MCF 10A (cell line): ENCODE measurements at regions of chr1 and their contacts with region 1.

Region 1: GRCh38 chr1:21368515-21369289 is 71.2 kb upstream of the NBPF3 start:
- DNase-seq: peak; percentile 87
- H3K4me3 Mint-ChIP-seq: no peak overlapping the region
- H3K27ac Mint-ChIP-seq: no peak overlapping the region
- H3K4me1 Mint-ChIP-seq: peaks cover 11% of the 10 kb centered on the region
- H3K27me3 Mint-ChIP-seq: no peaks in the 10 kb centered on the region
- CTCF ChIP-seq: peak; percentile 98

Region 2: GRCh38 chr1:21232044-21232443 is 136.7 kb before region 1 on chr1:
- CTCF ChIA-PET with region 1: interaction called, 283 read pairs
- POLR2A ChIA-PET with region 1: interaction called, 3 read pairs
- intact Hi-C with region 1: loop called (anchors 1 kb)
- DNase-seq: peak; percentile 79
- H3K4me3 Mint-ChIP-seq: no peak overlapping the region
- H3K27ac Mint-ChIP-seq: no peak overlapping the region
- H3K4me1 Mint-ChIP-seq: no peaks in the 10 kb centered on the region
- H3K27me3 Mint-ChIP-seq: no peaks in the 10 kb centered on the region
- CTCF ChIP-seq: peak; percentile 77

Region 3: DNA sequence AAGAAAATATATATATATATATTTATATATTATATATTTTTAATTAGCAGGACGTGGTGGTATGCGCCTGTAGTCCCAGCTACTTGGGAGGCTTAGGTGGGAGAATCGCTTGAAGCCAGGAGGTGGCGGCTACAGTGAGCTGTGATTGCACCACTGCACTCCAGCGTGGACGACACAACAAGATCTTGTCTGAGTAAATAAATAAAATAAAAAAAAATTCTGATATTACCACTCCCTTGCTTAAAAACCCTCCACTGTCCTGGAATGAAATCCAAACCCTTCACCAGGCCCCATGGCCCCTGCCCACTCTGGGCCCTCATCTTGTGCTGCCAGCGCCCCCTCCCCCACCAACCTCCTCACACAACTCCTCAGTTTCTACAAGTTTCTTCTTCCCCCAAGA is 76.7 kb before region 1 on chr1:
- CTCF ChIA-PET with region 1: no interaction called
- POLR2A ChIA-PET with region 1: no interaction called
- intact Hi-C with region 1: no loop called
- DNase-seq: no peak
- H3K4me3 Mint-ChIP-seq: no peak overlapping the region
- H3K27ac Mint-ChIP-seq: no peak overlapping the region
- H3K4me1 Mint-ChIP-seq: peaks cover 19% of the 10 kb centered on the region
- H3K27me3 Mint-ChIP-seq: no peaks in the 10 kb centered on the region
- CTCF ChIP-seq: no peak

Region 4: GRCh38 chr1:21302747-21303715 is 65.7 kb before region 1 on chr1:
- CTCF ChIA-PET with region 1: interaction called, 9 read pairs
- POLR2A ChIA-PET with region 1: no interaction called
- intact Hi-C with region 1: loop called (anchors 1 kb)
- DNase-seq: peak; percentile 53
- H3K4me3 Mint-ChIP-seq: peak overlapping the region; percentile 44
- H3K27ac Mint-ChIP-seq: peak overlapping the region; percentile 65
- H3K4me1 Mint-ChIP-seq: peaks cover 8% of the 10 kb centered on the region
- H3K27me3 Mint-ChIP-seq: no peaks in the 10 kb centered on the region
- CTCF ChIP-seq: peak; percentile 17

Region 5: DNA sequence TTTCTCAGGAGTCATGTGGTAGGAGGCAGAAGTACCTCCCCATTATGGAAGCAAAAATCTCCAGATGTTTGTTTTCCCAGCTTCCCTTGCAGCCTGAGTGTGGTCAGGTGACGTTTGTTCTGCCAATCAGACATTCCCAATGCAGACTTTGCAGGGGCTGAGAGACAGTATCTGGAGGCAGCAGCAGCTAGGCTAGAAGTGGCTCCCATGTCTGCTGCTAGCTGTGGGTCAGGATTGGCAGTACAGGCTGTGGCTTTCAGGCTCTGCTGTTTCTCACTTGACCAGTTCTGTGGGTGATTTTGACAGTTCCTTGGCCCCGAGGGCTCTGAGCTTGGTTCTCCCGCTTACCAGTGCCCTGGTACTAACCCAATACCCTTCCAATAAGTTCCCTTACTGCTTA is 12.7 kb after region 1 on chr1:
- CTCF ChIA-PET with region 1: interaction called, 10 read pairs
- POLR2A ChIA-PET with region 1: no interaction called
- intact Hi-C with region 1: no loop called
- DNase-seq: no peak
- H3K4me3 Mint-ChIP-seq: no peak overlapping the region
- H3K27ac Mint-ChIP-seq: no peak overlapping the region
- H3K4me1 Mint-ChIP-seq: no peaks in the 10 kb centered on the region
- H3K27me3 Mint-ChIP-seq: peaks cover 18% of the 10 kb centered on the region
- CTCF ChIP-seq: no peak

Region 6: GRCh38 chr1:21439721-21440629 is 71.3 kb after region 1 on chr1 and contains the start of gene NBPF3:
- CTCF ChIA-PET with region 1: no interaction called
- POLR2A ChIA-PET with region 1: no interaction called
- intact Hi-C with region 1: no loop called
- DNase-seq: peak; percentile 92
- H3K4me3 Mint-ChIP-seq: peak within 1 kb of the TSS; percentile 94
- H3K27ac Mint-ChIP-seq: peak within 1 kb of the TSS; percentile 88
- H3K4me1 Mint-ChIP-seq: peaks cover 4% of the 10 kb centered on the region
- H3K27me3 Mint-ChIP-seq: no peaks in the 10 kb centered on the region
- CTCF ChIP-seq: no peak
- total RNA-seq, gene NBPF3: 5.5 and 6.5 TPM in 2 replicates

Region 7: GRCh38 chr1:21594935-21595897 is 226.5 kb after region 1 on chr1:
- CTCF ChIA-PET with region 1: interaction called, 3 read pairs
- POLR2A ChIA-PET with region 1: no interaction called
- intact Hi-C with region 1: loop called (anchors 1 kb)
- DNase-seq: peak; percentile 74
- H3K4me3 Mint-ChIP-seq: no peak overlapping the region
- H3K27ac Mint-ChIP-seq: no peak overlapping the region
- H3K4me1 Mint-ChIP-seq: peaks cover 5% of the 10 kb centered on the region
- H3K27me3 Mint-ChIP-seq: peaks cover 20% of the 10 kb centered on the region
- CTCF ChIP-seq: peak; percentile 83